ENCODE measurements at regions of chr11 and their contacts with region 1.

Region 1: DNA sequence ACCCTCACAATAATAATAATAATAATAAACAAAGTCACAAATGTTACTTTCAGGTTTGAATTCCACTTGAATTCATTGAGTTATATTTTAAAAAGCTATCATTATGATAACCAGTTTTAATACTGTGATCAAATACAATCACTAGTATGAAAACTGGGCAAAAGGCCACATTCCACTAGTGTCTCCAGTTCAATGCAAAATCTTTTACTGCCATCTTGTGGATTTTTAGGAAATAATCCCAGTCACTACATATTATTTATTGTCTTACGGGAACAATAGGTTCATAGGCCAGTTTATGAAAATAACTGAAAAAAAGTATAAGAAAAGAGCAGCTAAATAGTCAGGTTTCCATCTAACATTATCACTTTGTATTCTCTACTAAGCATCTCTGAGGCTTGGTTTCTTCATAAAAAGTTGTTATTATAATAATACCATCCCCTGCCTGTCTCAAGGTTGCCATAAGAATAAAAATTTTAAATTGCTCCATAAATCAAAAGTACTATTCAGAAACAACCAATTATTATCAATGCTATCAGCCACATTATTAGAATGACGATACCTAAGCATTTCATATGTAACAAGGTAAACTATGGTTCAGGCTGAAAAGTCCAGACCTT is 533.9 kb upstream of the CCDC90B start:
- DNase-seq: no peak
- ATAC-seq: no peak
- H3K4me3 Mint-ChIP-seq: no peak overlapping the region
- H3K27ac Mint-ChIP-seq: no peak overlapping the region
- H3K4me1 Mint-ChIP-seq: no peaks in the 10 kb centered on the region
- H3K27me3 Mint-ChIP-seq: no peaks in the 10 kb centered on the region

Region 2: DNA sequence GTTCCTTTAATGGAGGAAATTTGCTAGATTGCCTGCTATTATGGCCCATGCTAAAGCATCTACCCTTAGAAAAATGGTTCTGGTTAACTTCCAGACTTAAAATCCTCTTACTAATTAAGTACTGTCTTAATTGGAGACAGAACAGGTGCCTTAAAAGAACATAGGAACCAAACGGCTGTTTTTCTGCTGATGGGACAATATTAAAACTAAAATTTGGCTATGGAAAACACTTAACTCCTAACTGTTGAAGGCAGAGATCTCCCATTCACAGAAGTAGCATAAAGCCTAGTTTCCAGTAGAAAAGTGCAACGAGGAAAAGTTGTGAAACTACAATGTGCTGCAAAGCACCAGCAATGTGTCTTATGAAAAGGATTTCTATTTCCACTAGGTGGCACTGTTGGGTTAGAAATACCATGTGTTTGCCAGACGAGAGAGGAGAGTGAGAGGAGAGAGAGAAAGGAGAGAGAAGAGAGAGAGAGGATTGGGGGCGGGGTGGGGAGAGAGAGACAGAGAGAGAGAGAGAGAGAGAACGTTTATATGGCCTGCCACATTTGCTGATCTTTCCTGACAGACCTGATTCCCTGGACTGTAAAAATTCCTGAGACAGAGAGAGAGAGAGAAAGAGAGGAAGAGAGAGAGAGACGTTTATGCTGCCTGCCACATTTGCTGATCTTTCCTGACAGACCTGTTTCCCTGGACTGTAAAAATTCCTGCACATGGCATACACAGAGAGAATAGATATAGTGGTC is 1137.9 kb before region 1 on chr11:
- CTCF ChIA-PET with region 1: no interaction called
- POLR2A ChIA-PET with region 1: no interaction called
- intact Hi-C with region 1: loop called in 1 of 2 experiments (anchors 5 kb)
- DNase-seq: no peak
- ATAC-seq: peak; percentile 71
- H3K4me3 Mint-ChIP-seq: no peak overlapping the region
- H3K27ac Mint-ChIP-seq: no peak overlapping the region
- H3K4me1 Mint-ChIP-seq: peaks cover 3% of the 10 kb centered on the region
- H3K27me3 Mint-ChIP-seq: peaks cover 20% of the 10 kb centered on the region

Region 3: DNA sequence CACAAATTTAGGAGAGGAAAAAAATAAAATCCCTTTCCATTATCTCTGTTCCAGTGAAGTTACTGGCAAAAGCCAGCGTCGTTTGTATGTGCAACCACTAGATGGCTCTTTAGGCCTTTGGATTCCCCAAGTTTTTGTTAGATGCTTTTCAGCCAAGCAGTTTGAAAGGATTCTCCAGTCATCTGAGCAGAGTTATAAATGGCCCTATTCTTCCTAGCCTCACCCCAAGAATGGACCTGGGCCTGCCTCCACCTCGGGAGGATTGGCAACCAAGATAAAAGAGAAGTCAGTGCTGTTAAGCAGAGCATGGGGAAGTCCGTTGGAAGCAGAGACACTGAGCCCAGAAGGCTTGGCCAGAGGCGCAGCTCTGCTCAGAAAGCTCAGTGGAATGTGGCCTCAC is 1101.7 kb before region 1 on chr11:
- CTCF ChIA-PET with region 1: interaction called, 4 read pairs
- POLR2A ChIA-PET with region 1: no interaction called
- intact Hi-C with region 1: loop called (anchors 1 to 5 kb)
- DNase-seq: peak; percentile 41
- ATAC-seq: peak; percentile 55
- H3K4me3 Mint-ChIP-seq: no peak overlapping the region
- H3K27ac Mint-ChIP-seq: no peak overlapping the region
- H3K4me1 Mint-ChIP-seq: no peaks in the 10 kb centered on the region
- H3K27me3 Mint-ChIP-seq: peaks cover under 1% of the 10 kb centered on the region

Region 4: GRCh38 chr11:82906244-82906654 is 913.8 kb before region 1 on chr11:
- CTCF ChIA-PET with region 1: no interaction called
- POLR2A ChIA-PET with region 1: no interaction called
- intact Hi-C with region 1: loop called in 1 of 2 experiments (anchors 5 kb)
- DNase-seq: no peak
- ATAC-seq: no peak
- H3K4me3 Mint-ChIP-seq: no peak overlapping the region
- H3K27ac Mint-ChIP-seq: no peak overlapping the region
- H3K4me1 Mint-ChIP-seq: peaks cover 46% of the 10 kb centered on the region
- H3K27me3 Mint-ChIP-seq: no peaks in the 10 kb centered on the region

Region 5: DNA sequence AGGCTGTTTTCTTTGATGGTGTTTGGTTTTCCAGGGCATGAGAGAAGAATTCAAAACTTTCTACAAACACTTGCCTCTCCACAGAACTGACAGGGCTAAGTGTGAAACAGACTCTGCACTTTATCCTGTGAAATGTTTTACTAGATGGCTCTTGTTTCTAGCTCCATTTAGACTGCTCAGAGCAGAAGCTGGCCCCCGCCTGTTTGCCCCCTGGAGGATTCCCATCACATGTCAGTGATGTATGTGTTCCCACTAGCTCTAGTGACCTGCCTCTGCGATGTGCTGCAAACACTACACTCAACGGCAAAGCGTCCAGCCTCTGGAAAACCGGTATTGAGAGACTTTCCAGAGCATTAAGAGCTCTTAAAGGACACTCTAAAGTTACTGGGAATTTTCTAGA is 704.5 kb before region 1 on chr11:
- CTCF ChIA-PET with region 1: no interaction called
- POLR2A ChIA-PET with region 1: no interaction called
- intact Hi-C with region 1: loop called in 1 of 2 experiments (anchors 10 kb)
- DNase-seq: no peak
- ATAC-seq: no peak
- H3K4me3 Mint-ChIP-seq: no peak overlapping the region
- H3K27ac Mint-ChIP-seq: no peak overlapping the region
- H3K4me1 Mint-ChIP-seq: peaks cover 30% of the 10 kb centered on the region
- H3K27me3 Mint-ChIP-seq: no peaks in the 10 kb centered on the region

Region 6: DNA sequence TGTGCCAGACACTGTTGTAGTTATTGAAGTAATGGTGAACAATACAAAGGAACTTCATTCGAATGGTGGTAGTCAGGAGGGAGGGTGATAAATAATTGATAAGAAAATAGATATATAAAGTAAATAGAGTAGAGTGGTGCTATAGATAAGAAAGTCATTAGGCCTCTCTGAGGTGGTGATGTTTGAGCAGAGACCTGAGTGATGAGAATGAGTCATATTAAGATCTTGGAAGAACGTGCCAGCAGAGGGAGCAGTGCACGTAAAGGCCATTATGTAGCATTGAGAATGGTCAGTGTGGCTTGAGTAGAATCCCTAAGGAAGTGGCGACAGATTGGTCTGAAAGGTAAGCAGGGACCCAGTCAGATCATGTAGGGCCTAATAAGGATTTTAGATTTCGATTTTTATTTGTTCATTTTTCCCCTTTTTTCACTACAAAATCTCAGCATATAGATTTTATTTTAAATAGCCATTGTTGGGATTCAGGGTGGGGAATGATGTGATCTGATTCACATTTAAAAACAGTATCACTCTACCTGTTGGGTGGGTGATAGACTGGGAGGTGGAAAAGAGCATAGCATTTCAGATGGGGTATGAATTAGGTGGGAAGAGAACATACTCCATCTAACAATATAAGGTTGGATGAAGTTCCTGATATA is 578.6 kb before region 1 on chr11:
- CTCF ChIA-PET with region 1: no interaction called
- POLR2A ChIA-PET with region 1: no interaction called
- intact Hi-C with region 1: loop called in 1 of 2 experiments (anchors 2 kb)
- DNase-seq: peak; percentile 39
- ATAC-seq: peak; percentile 53
- H3K4me3 Mint-ChIP-seq: no peak overlapping the region
- H3K27ac Mint-ChIP-seq: no peak overlapping the region
- H3K4me1 Mint-ChIP-seq: no peaks in the 10 kb centered on the region
- H3K27me3 Mint-ChIP-seq: no peaks in the 10 kb centered on the region

Region 7: GRCh38 chr11:83292709-83293456 is 527.2 kb before region 1 on chr11:
- CTCF ChIA-PET with region 1: interaction called, 22 read pairs
- POLR2A ChIA-PET with region 1: no interaction called
- intact Hi-C with region 1: loop called (anchors 1 to 2 kb)
- DNase-seq: peak; percentile 50
- ATAC-seq: peak; percentile 98
- H3K4me3 Mint-ChIP-seq: peak overlapping the region; percentile 52
- H3K27ac Mint-ChIP-seq: peak overlapping the region; percentile 56
- H3K4me1 Mint-ChIP-seq: peaks cover 10% of the 10 kb centered on the region
- H3K27me3 Mint-ChIP-seq: peaks cover 7% of the 10 kb centered on the region